ENCODE measurements at regions of chr9 and their contacts with region 1.

Region 1: DNA sequence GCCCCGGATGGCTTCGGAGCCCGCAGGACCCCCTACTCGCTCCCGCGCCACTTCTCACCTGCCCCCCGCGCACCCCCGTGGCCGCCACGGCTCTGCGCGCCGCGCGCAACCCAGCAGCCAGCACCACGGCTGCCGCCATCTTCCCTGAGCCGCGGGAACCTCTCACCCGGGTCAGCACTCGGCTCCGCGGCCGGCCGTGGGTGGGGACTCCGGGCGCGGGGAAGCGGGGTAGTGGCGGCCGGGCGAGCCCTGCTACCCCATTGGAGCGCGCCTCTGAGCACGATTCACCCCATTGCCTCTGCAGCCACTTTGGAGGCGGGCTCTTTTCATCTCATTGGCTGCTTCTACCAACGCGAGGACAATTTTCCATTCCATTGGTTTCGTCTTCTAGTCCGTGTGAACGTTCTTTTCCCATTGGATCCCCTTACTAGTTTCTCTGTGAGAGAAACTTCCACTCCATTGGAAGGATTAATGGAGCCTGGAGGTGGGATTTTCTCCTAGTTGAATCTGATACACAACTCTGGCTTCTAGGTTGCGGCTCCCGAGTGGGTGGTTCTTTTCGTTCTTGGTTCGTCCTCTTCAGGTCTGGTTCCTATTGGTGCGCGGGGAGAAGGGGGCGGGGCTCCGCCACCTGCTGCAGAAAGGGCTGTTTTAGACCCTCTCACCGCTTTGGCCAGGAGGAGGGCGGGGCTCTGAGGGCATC is at the start of gene HINT2:
- DNase-seq: peak; percentile 98
- H3K4me3 Mint-ChIP-seq: peak within 1 kb of the TSS; percentile 92
- H3K27ac Mint-ChIP-seq: peak within 1 kb of the TSS; percentile 97
- H3K4me1 Mint-ChIP-seq: peaks cover 28% of the 10 kb centered on the region
- H3K27me3 Mint-ChIP-seq: no peaks in the 10 kb centered on the region
- total RNA-seq, gene HINT2: 61.0 to 68.3 TPM

Region 2: GRCh38 chr9:34374905-34375552 is 1440.0 kb before region 1 on chr9:
- CTCF ChIA-PET with region 1: no interaction called
- intact Hi-C with region 1: no loop called
- DNase-seq: no peak
- H3K4me3 Mint-ChIP-seq: no peak overlapping the region
- H3K27ac Mint-ChIP-seq: no peak overlapping the region
- H3K4me1 Mint-ChIP-seq: peaks cover 18% of the 10 kb centered on the region
- H3K27me3 Mint-ChIP-seq: no peaks in the 10 kb centered on the region

Region 3: GRCh38 chr9:35646533-35647265 is 168.3 kb before region 1 on chr9:
- CTCF ChIA-PET with region 1: no interaction called
- intact Hi-C with region 1: loop called (anchors 1 kb)
- DNase-seq: peak; percentile 94
- H3K4me3 Mint-ChIP-seq: peak overlapping the region; percentile 90
- H3K27ac Mint-ChIP-seq: peak overlapping the region; percentile 83
- H3K4me1 Mint-ChIP-seq: peaks cover 43% of the 10 kb centered on the region
- H3K27me3 Mint-ChIP-seq: no peaks in the 10 kb centered on the region

Region 4: DNA sequence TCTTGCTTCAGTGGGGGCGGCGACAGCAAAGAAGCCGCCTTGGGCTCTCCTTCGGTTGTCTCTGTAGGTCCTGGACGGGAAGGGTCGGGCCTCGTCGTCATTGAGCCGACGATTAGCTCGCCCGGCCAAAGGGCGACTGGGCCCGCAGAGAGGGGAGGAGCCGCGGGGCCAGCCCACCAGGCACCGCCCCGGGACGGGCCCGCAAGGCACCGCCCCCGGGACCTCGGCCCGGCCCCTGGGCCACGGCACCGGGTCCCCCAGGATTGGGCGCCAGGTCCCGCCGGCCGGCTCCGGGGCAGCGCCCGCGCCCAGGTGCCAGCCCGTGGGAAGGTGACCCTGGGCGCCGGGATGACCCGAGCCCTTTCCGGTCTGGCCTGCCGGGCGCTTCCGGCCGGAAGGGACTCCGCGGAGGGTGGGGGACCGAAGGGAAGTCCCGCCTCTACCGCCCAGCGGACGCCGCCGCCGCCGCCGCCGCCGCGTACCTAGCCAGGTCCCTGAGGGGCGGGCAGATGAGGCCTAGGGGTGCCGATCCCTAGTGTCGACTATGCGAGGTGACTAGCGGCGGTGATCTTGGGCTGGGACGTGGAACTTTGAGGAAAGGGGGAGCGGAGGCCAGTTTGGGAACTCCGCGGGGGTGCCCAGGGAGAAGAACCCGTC is 66.0 kb before region 1 on chr9 and contains the starts of genes GBA2 and RGP1:
- CTCF ChIA-PET with region 1: interaction called, 4 read pairs
- intact Hi-C with region 1: loop called (anchors 1 kb)
- DNase-seq: peak; percentile 67
- H3K4me3 Mint-ChIP-seq: peak within 1 kb of the TSS; percentile 89
- H3K27ac Mint-ChIP-seq: peak within 1 kb of the TSS; percentile 88
- H3K4me1 Mint-ChIP-seq: peaks cover 32% of the 10 kb centered on the region
- H3K27me3 Mint-ChIP-seq: no peaks in the 10 kb centered on the region
- total RNA-seq, gene GBA2: 20.3 to 22.7 TPM
- total RNA-seq, gene RGP1: 12.0 to 13.3 TPM

Region 5: GRCh38 chr9:35790385-35791296 is 24.4 kb before region 1 on chr9:
- CTCF ChIA-PET with region 1: interaction called, 15 read pairs
- intact Hi-C with region 1: loop called (anchors 2 kb)
- DNase-seq: peak; percentile 69
- H3K4me3 Mint-ChIP-seq: no peak overlapping the region
- H3K27ac Mint-ChIP-seq: no peak overlapping the region
- H3K4me1 Mint-ChIP-seq: no peaks in the 10 kb centered on the region
- H3K27me3 Mint-ChIP-seq: no peaks in the 10 kb centered on the region

Region 6: GRCh38 chr9:35882263-35882848 is 67.4 kb after region 1 on chr9:
- CTCF ChIA-PET with region 1: interaction called, 11 read pairs
- intact Hi-C with region 1: no loop called
- DNase-seq: peak; percentile 89
- H3K4me3 Mint-ChIP-seq: no peak overlapping the region
- H3K27ac Mint-ChIP-seq: no peak overlapping the region
- H3K4me1 Mint-ChIP-seq: no peaks in the 10 kb centered on the region
- H3K27me3 Mint-ChIP-seq: no peaks in the 10 kb centered on the region

Measured in activated naive CD4-positive, alpha-beta T cell treated with anti-CD3 and anti-CD28 coated beads for 36 hours (primary cell).